ENCODE measurements at regions of chr3 and their contacts with region 1.

Region 1: DNA sequence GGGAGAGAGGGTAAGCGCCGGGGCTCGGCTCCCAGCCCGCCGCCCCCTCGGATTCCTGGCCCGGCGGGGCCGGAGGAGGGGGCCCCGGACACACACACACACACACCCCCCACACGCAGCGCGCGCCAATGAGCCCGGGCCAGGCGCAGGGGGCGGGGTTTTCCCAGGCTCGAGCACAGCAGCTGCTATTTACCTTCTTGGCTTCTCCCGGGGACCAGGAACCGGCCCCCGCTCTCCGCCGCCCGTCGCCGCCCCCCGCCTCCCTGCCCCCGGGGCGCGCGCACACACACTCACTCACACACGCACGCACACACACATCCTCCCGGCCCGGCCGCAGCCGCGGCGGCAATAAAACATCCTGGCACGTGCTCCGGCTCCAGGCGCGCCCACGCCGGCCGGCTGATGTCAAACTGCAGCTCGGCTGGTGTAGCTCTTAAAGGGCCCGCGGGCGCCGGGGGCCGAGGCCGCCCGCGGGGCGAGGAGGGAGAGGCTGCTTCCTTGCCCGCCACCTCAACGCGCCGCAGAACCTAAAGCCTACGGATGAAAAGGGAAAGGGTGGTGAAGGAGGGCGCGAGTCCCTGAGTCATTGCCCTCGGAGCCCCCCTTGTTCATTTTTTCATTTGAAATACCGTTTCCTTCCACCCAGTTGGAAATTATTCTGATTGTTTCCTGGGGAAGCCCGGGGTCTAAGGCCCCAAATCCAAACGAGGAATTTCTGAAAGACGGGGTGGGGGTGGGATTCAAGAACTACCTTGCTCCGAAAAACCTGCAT is 1.0 kb upstream of the HES1 start:
- DNase-seq: peak; percentile 56 to 90 (median 75)
- ATAC-seq: peak; percentile 67
- H3K4me3 ChIP-seq: peak overlapping the region; percentile 41 to 52
- H3K4me3 Mint-ChIP-seq: peak overlapping the region; percentile 86
- H3K27ac ChIP-seq: no peak overlapping the region
- H3K27ac Mint-ChIP-seq: peak overlapping the region; percentile 91
- H3K4me1 ChIP-seq: peaks cover 41% of the 10 kb centered on the region
- H3K4me1 Mint-ChIP-seq: peaks cover 48% of the 10 kb centered on the region
- H3K27me3 ChIP-seq: peaks cover 32 to 40% of the 10 kb centered on the region in 2 experiments
- H3K27me3 Mint-ChIP-seq: peaks cover 65% of the 10 kb centered on the region
- CTCF ChIP-seq: no peak

Region 2: GRCh38 chr3:193592944-193593667 is 541.8 kb before region 1 on chr3 and contains the start of gene OPA1:
- CTCF ChIA-PET with region 1: no interaction called
- POLR2A ChIA-PET with region 1: no interaction called
- intact Hi-C with region 1: loop called in 1 of 2 experiments (anchors 5 kb)
- DNase-seq: peak; percentile 68 to 95 (median 85)
- ATAC-seq: peak; percentile 85
- H3K4me3 ChIP-seq: peak within 1 kb of the TSS; percentile 73 to 83
- H3K4me3 Mint-ChIP-seq: peak within 1 kb of the TSS; percentile 99
- H3K27ac ChIP-seq: peak within 1 kb of the TSS; percentile 76 to 88
- H3K27ac Mint-ChIP-seq: peak within 1 kb of the TSS; percentile 98
- H3K4me1 ChIP-seq: peaks cover 20% of the 10 kb centered on the region
- H3K4me1 Mint-ChIP-seq: peaks cover 58% of the 10 kb centered on the region
- H3K27me3 ChIP-seq: no peaks in the 10 kb centered on the region
- H3K27me3 Mint-ChIP-seq: no peaks in the 10 kb centered on the region
- CTCF ChIP-seq: no peak
- total RNA-seq, gene OPA1: 64.0 to 69.9 TPM

Region 3: DNA sequence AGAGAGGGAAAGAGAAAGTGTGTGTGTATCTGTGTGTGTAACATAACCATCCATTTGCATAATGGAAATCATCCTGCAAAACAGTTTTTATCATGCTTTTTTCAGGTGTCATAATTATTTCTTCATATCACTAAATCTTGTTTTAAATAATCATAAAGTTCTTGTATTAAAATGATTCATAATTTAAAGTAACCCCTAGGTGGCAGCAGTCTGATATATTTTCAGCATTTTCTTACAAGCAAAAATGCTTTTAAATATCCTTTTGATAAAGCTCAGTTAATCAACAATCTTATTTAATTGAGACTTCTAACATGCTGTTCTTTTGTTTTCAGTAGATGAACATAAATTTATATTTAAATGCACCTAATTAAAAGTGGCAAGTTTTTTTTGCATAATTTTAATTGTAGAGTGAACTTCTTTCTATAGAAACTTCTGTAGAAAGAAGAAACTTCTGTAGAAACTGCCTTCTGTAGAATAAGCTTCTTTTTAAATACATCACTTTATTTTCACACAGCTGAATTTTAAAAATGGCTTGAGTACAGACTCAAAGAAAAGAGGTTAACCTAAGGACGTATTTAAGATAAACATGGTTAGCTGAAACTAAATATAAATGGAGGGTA is 469.5 kb before region 1 on chr3:
- CTCF ChIA-PET with region 1: interaction called, 3 read pairs
- POLR2A ChIA-PET with region 1: no interaction called
- intact Hi-C with region 1: loop called (anchors 2 to 5 kb)
- DNase-seq: peak in 2 of 9 experiments; percentile 34 to 53
- ATAC-seq: no peak
- H3K4me3 ChIP-seq: no peak overlapping the region
- H3K4me3 Mint-ChIP-seq: no peak overlapping the region
- H3K27ac ChIP-seq: no peak overlapping the region
- H3K27ac Mint-ChIP-seq: no peak overlapping the region
- H3K4me1 ChIP-seq: no peaks in the 10 kb centered on the region
- H3K4me1 Mint-ChIP-seq: no peaks in the 10 kb centered on the region
- H3K27me3 ChIP-seq: no peaks in the 10 kb centered on the region
- H3K27me3 Mint-ChIP-seq: no peaks in the 10 kb centered on the region
- CTCF ChIP-seq: peak; percentile 76

Region 4: DNA sequence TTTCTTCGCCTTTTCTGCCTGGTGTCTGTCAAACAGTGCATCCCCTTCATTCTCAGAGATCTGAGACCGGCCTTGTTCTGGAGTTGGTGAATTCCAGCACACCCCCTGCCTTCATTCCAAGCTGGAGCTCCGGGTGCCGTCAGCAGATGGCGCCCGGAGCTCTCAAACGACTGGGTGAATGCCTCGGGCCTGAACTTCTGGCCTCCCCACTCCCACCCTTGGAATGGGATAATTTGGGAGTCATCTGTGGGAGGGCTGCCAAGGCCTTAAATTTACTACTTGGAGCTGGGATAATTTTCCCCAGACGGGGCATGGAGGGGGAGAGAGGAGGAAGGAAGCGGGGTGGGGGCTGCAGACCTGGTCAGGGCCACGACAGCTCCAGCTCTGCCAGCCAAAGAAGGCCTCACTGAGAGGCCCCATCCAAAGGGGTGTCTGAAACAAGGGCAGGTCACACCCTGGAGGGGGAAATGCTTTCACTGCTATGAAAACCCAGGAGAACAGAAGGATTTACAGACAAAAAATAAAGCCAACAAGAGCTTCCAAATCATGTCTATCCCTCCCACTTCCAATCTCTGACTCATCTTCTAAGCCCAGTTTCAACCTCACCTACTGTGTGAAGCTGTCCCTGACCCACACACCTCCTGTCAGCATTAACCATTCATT is 354.0 kb before region 1 on chr3:
- CTCF ChIA-PET with region 1: no interaction called
- POLR2A ChIA-PET with region 1: no interaction called
- intact Hi-C with region 1: loop called (anchors 2 kb)
- DNase-seq: peak in 3 of 9 experiments; percentile 13 to 38 (median 22)
- ATAC-seq: no peak
- H3K4me3 ChIP-seq: no peak overlapping the region
- H3K4me3 Mint-ChIP-seq: no peak overlapping the region
- H3K27ac ChIP-seq: no peak overlapping the region
- H3K27ac Mint-ChIP-seq: no peak overlapping the region
- H3K4me1 ChIP-seq: no peaks in the 10 kb centered on the region
- H3K4me1 Mint-ChIP-seq: peaks cover 4% of the 10 kb centered on the region
- H3K27me3 ChIP-seq: no peaks in the 10 kb centered on the region
- H3K27me3 Mint-ChIP-seq: peaks cover 29% of the 10 kb centered on the region
- CTCF ChIP-seq: no peak

Region 5: DNA sequence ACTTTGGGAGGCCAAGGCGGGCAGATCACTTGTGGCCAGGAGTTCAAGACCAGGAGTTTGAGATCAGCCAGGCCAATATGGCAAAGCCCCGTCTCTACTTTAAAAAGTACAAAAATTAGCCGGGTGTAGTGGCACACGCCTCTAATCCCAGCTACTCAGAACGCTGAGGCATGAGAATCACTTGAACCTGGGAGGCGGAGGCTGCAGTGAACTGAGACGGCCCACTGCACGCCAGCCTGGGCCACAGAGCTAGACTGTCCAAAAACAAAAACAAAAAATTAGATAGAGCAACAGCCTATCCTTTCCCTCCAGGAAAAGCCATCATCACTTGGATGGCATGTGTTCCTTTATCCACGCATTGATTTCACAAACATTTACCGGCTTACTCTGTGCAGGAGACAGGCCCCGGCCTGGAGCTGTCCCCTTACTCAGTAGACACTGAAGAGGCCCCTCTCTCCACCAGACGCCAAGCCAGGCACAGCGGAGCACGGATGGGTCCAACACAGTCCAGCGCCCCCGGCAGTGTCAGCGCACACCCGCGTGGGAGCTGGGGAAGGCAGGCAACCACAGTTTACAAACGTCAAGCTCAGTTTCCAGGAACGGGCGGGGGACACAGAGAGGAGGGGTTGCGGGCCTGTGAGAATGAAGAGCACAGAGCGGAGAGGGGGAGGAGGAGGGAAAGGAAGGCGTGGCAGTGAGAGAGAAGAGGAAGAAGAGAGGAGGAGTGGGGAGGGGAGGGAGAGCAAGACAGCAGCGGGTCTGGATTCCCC is 261.0 kb after region 1 on chr3:
- CTCF ChIA-PET with region 1: no interaction called
- POLR2A ChIA-PET with region 1: interaction called, 3 read pairs
- intact Hi-C with region 1: loop called in 1 of 2 experiments (anchors 5 kb)
- DNase-seq: peak in 8 of 9 experiments; percentile 23 to 80 (median 59)
- ATAC-seq: peak; percentile 72
- H3K4me3 ChIP-seq: peak overlapping the region; percentile 51 to 60
- H3K4me3 Mint-ChIP-seq: peak overlapping the region; percentile 81
- H3K27ac ChIP-seq: peak overlapping the region; percentile 48 to 63
- H3K27ac Mint-ChIP-seq: peak overlapping the region; percentile 82
- H3K4me1 ChIP-seq: peaks cover 30% of the 10 kb centered on the region
- H3K4me1 Mint-ChIP-seq: peaks cover 51% of the 10 kb centered on the region
- H3K27me3 ChIP-seq: peaks cover 0 to 3% of the 10 kb centered on the region in 2 experiments
- H3K27me3 Mint-ChIP-seq: peaks cover 2% of the 10 kb centered on the region
- CTCF ChIP-seq: no peak